Left cardiac atrium (tissue), 4 donors: ENCODE measurements at regions of chr3 and their contacts with region 1.

Region 1: GRCh38 chr3:133578548-133579191 is 5.2 kb downstream of the CDV3 start:
- DNase-seq: no peak
- ATAC-seq: no peak

Region 2: DNA sequence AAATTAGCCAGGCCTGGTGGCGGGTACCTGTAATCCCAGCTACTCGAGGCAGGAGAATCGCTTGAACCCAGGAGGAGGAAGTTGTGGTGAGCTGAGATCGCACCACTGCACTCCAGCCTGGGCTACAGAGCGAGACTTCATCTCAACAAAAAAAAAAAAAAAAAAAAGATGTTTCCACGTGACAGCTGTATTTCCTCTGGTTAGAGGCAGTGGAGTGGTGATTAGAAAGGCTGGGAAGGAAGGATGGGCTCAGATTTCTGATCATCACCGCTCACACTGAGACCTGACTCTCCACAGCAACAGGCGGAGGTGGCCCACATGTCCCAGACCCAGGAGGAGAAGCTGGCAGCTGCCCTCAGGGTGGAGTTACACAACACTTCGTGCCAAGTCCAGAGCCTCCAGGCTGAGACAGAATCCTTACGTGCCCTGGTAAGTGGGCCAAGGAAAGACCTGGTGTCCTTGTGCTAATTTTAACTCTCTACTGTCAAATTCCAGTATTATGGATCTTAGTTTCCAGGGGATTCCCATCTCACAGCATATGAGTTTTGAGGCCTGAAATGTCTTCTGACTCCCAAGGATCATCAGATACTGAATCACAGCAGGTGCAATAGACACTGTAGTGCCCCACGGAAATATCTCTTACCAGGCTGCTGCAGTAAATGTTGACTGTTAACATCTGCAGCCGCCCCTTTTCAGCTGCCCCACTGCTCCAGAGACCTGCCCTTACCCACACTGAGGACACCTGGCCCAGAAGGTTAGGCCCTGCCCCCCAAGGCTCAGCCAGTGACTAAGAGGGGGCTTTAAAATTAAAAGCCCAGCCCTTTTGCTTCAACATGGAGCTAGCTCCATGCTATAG is 111.9 kb before region 1 on chr3:
- intact Hi-C with region 1: loop called in 1 of 2 experiments (anchors 5 kb)
- DNase-seq: peak; percentile 34
- ATAC-seq: peak in 1 of 2 donors; percentile 48

Region 3: DNA sequence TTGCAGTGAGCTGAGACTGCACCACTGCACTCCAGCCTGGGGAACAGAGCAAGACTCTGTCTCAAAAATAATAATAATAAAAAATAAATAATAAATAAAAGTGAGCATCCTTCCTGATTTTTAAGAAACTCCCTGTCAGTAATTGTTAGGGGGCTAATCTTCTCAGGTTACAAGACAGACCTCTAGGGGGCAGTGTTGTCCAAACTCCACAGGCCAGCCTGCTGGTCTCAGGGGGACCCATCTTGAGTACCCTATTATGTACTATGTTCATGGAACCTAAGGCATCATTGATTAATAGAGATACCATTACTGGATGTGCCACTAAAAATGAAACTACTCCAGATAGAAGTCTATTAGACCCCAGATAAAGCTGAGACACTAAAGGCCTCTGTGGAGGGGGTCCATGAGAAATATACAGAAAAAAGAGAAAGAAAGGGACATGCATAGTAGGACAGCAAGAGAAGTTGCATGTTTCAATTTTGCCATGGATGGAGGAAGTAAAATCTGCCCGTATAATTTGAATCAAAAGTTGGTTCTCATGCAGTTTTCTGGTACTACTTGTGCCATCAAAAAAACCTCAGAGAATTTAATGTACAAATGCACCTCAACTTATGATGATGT is 90.6 kb before region 1 on chr3:
- intact Hi-C with region 1: loop called in 1 of 2 experiments (anchors 5 kb)
- DNase-seq: no peak
- ATAC-seq: peak in 1 of 2 donors; percentile 50

Region 4: GRCh38 chr3:134126153-134126552 is 547.5 kb after region 1 on chr3:
- intact Hi-C with region 1: no loop called
- DNase-seq: no peak
- ATAC-seq: no peak